Activated T-helper 1 cell treated with anti-CD3 and anti-CD28 coated beads, Interleukin-12 subunit alpha, Interleukin-12 subunit beta, Interleukin-2, Interleukin-4 antibody, amounts not matched to agents 30 ng/mL and 10 ng/mL and 1 ng/mL, durations not matched to agents 14 hours and 24 hours and 36 hours (primary cell): ENCODE measurements at regions of chr1 and their contacts with region 1.

Region 1: GRCh38 chr1:35769759-35770446 is at the start of gene CLSPN:
- DNase-seq: peak; percentile 95
- H3K4me3 Mint-ChIP-seq: peak within 1 kb of the TSS; percentile 100
- H3K27ac Mint-ChIP-seq: peak within 1 kb of the TSS; percentile 98
- H3K4me1 Mint-ChIP-seq: peaks cover 19% of the 10 kb centered on the region
- H3K27me3 Mint-ChIP-seq: no peaks in the 10 kb centered on the region
- total RNA-seq, gene CLSPN: 53.0 and 53.1 TPM in 2 replicates

Region 2: DNA sequence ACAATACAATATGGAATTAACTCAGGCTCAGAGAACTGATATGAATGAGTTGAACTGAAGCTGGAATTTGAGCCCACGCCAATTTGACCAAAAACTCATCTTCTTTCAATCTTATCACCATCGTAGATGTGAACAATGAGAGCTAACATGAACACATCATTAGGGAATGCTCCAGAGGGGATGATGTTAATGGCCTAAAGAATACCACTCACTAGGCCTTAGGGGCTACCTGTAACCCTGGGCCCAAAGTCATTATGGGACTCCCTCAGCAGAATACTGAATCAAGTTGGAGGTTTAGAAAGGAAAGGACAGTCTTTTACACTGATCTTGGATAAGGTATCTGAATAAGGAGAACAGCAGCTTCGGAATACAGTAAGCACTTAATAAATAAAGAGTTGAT is 1519.6 kb before region 1 on chr1:
- intact Hi-C with region 1: no loop called
- DNase-seq: no peak
- H3K4me3 Mint-ChIP-seq: no peak overlapping the region
- H3K27ac Mint-ChIP-seq: no peak overlapping the region
- H3K4me1 Mint-ChIP-seq: no peaks in the 10 kb centered on the region
- H3K27me3 Mint-ChIP-seq: peaks cover 6% of the 10 kb centered on the region

Region 3: GRCh38 chr1:35202048-35202719 is 567.7 kb before region 1 on chr1:
- intact Hi-C with region 1: loop called (anchors 1 kb)
- DNase-seq: peak; percentile 63
- H3K4me3 Mint-ChIP-seq: no peak overlapping the region
- H3K27ac Mint-ChIP-seq: no peak overlapping the region
- H3K4me1 Mint-ChIP-seq: peaks cover 8% of the 10 kb centered on the region
- H3K27me3 Mint-ChIP-seq: peaks cover 17% of the 10 kb centered on the region

Region 4: DNA sequence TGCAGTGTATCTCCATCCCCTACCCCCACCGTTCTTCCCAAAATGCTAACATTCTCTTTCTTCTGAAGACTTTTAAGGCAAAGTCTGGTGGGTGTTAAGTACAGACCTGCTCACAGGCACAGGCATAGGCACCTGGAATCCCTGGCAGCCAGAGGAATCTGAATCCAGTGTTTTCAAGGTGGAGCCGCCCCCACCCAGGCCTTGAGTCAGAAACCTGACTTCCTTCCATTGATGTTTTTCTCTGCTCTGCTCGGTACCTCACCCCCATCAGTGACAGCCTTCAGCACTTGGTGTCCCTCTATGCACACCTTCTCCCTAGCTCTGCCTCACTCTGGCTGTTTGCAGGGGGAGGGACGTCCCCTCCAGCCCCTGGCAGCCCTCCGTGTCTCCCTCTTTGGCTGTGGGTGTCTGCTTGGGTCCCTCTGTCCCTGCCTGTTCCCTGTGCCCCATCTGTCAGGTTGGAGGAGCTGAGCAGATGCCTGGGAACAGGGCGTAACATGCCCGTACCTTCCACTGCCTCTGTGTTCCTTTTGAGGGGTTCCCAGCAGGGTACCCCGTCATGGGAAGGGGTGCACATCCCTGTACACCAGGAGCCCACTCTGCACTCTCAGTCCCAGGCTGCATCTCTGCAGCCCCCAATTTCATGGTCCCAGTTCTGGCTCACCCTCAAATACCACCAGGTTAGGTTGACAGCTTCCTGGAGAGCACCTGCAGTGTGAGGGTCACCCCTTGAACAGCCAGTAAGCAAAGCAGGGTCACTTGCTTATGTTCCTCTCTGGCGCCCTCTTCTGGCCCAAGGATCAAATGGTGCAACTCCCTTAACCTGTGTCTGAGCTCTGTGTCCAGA is 205.6 kb before region 1 on chr1:
- intact Hi-C with region 1: loop called (anchors 1 kb)
- DNase-seq: peak; percentile 69
- H3K4me3 Mint-ChIP-seq: peak overlapping the region; percentile 3
- H3K27ac Mint-ChIP-seq: no peak overlapping the region
- H3K4me1 Mint-ChIP-seq: peaks cover 42% of the 10 kb centered on the region
- H3K27me3 Mint-ChIP-seq: no peaks in the 10 kb centered on the region

Region 5: GRCh38 chr1:35715568-35716002 is 54.3 kb before region 1 on chr1:
- intact Hi-C with region 1: loop called (anchors 1 kb)
- DNase-seq: peak; percentile 69
- H3K4me3 Mint-ChIP-seq: peak overlapping the region; percentile 56
- H3K27ac Mint-ChIP-seq: no peak overlapping the region
- H3K4me1 Mint-ChIP-seq: peaks cover 37% of the 10 kb centered on the region
- H3K27me3 Mint-ChIP-seq: peaks cover 4% of the 10 kb centered on the region

Region 6: DNA sequence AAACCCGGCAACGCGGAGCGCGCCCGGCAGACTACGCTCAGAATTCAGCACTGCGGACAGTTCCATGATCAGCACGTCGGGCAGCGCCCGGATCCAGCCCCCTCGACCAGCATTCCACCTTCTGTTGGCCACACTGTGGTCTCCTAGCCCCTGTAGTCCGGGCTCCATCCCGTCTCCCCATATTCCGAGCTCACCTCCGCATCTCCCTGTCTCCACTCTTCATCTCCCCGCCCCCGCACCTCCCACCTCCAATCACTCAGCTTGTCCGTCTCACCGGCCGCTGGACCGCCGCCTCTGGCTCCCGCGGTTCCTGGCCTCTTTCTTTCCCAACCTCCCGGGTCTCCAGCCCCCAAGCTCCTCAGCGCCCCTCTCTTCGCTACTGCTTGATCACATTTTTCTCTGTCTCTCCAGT is 1994.5 kb after region 1 on chr1:
- intact Hi-C with region 1: no loop called
- DNase-seq: peak; percentile 29
- H3K4me3 Mint-ChIP-seq: no peak overlapping the region
- H3K27ac Mint-ChIP-seq: peak overlapping the region; percentile 18
- H3K4me1 Mint-ChIP-seq: peaks cover 12% of the 10 kb centered on the region
- H3K27me3 Mint-ChIP-seq: peaks cover 60% of the 10 kb centered on the region